ENCODE measurements at regions of chr1 and their contacts with region 1.

Region 1: GRCh38 chr1:241611063-241611462 is 29.1 kb downstream of the CHML start:
- DNase-seq: peak in 5 of 14 experiments; percentile 5 to 76 (median 68)
- ATAC-seq: peak; percentile 93
- H3K4me3 ChIP-seq: no peak overlapping the region
- H3K4me3 Mint-ChIP-seq: no peak overlapping the region
- H3K27ac ChIP-seq: no peak overlapping the region
- H3K27ac Mint-ChIP-seq: no peak overlapping the region
- H3K4me1 ChIP-seq: no peaks in the 10 kb centered on the region
- H3K4me1 Mint-ChIP-seq: no peaks in the 10 kb centered on the region
- H3K27me3 ChIP-seq: no peaks in the 10 kb centered on the region
- H3K27me3 Mint-ChIP-seq: no peaks in the 10 kb centered on the region
- CTCF ChIP-seq: peak; percentile 85

Region 2: DNA sequence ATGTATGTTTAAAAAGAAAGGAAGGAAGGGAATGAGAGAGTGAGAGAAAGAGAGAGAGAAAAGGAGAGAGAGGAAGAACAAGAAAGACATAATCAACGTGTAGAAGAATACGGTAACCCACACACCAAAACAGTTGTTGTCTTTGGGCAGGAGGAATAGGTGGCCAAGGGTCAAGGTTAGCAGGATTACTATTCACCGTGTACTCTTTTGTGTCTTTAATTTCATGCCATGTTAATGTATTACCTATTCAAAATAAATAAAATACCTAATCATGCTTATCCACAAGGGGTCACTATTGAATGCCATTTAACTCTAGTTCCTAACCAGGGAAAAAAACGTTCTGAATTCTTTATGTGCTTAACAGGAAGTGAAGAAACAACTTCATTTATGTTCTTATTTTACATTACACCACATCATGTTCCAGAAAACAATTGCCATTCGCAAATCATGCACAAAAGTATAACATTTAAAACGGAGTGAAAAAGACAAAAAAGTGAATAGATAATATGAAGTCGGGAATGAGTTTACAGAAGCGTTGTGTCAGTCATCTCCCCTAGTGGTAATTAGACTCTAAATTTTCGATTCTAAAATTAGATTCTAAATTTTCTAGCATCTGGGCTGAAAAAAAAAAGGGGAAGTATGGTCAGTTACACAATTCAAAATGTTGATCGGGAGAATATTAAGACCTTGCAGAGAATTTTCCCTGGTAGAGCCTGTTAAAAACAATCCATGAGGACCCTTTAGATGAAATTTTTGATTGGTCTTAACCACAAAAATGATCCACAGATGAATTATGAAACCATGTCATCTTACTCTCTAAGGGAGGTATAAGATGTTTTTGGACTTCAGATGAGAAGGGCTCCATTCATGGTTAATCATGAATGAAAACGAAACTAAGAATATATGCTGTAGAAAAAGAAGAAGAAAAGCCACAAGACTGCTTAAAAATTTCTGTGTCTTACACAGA is 79.6 kb before region 1 on chr1:
- CTCF ChIA-PET with region 1: no interaction called
- POLR2A ChIA-PET with region 1: no interaction called
- intact Hi-C with region 1: loop called (anchors 1 to 5 kb)
- DNase-seq: peak in 3 of 14 experiments; percentile 78 to 81 (median 78)
- ATAC-seq: peak; percentile 89
- H3K4me3 ChIP-seq: peak overlapping the region; percentile 59
- H3K4me3 Mint-ChIP-seq: peak overlapping the region; percentile 97
- H3K27ac ChIP-seq: no peak overlapping the region
- H3K27ac Mint-ChIP-seq: peak overlapping the region; percentile 42
- H3K4me1 ChIP-seq: peaks cover 2% of the 10 kb centered on the region
- H3K4me1 Mint-ChIP-seq: peaks cover 6% of the 10 kb centered on the region
- H3K27me3 ChIP-seq: no peaks in the 10 kb centered on the region
- H3K27me3 Mint-ChIP-seq: no peaks in the 10 kb centered on the region
- CTCF ChIP-seq: peak; percentile 74

Region 3: DNA sequence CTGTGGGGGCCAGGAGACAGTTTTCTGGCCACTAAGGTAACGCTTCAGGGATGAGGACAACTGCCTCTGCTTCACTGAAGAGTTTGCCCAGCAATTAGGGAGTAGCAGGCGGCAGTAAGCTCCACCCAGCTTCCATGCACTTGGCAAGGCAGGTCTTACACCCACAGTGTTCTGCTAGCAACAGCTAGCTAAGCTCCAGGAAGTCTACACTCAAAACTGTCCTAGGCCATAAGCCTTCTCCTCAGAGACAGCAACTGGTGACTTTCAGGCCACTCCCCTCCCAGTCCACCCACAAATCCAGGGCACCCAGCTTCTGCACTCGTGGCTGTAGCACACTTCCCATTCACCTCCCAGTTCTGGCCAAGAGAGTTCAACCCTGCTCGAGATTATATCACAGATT is 31.6 kb before region 1 on chr1:
- CTCF ChIA-PET with region 1: no interaction called
- POLR2A ChIA-PET with region 1: no interaction called
- intact Hi-C with region 1: no loop called
- DNase-seq: no peak
- ATAC-seq: no peak
- H3K4me3 ChIP-seq: no peak overlapping the region
- H3K4me3 Mint-ChIP-seq: no peak overlapping the region
- H3K27ac ChIP-seq: no peak overlapping the region
- H3K27ac Mint-ChIP-seq: no peak overlapping the region
- H3K4me1 ChIP-seq: no peaks in the 10 kb centered on the region
- H3K4me1 Mint-ChIP-seq: no peaks in the 10 kb centered on the region
- H3K27me3 ChIP-seq: no peaks in the 10 kb centered on the region
- H3K27me3 Mint-ChIP-seq: peaks cover 26% of the 10 kb centered on the region
- CTCF ChIP-seq: no peak

Region 4: GRCh38 chr1:241592273-241592958 is 18.6 kb before region 1 on chr1:
- CTCF ChIA-PET with region 1: no interaction called
- POLR2A ChIA-PET with region 1: no interaction called
- intact Hi-C with region 1: no loop called
- DNase-seq: peak in 2 of 14 experiments; percentile 21 to 54
- ATAC-seq: no peak
- H3K4me3 ChIP-seq: no peak overlapping the region
- H3K4me3 Mint-ChIP-seq: no peak overlapping the region
- H3K27ac ChIP-seq: no peak overlapping the region
- H3K27ac Mint-ChIP-seq: no peak overlapping the region
- H3K4me1 ChIP-seq: no peaks in the 10 kb centered on the region
- H3K4me1 Mint-ChIP-seq: no peaks in the 10 kb centered on the region
- H3K27me3 ChIP-seq: no peaks in the 10 kb centered on the region
- H3K27me3 Mint-ChIP-seq: no peaks in the 10 kb centered on the region
- CTCF ChIP-seq: no peak

Region 5: GRCh38 chr1:241749901-241750695 is 139.0 kb after region 1 on chr1:
- CTCF ChIA-PET with region 1: no interaction called
- POLR2A ChIA-PET with region 1: no interaction called
- intact Hi-C with region 1: loop called in 1 of 2 experiments (anchors 10 kb)
- DNase-seq: no peak
- ATAC-seq: no peak
- H3K4me3 ChIP-seq: no peak overlapping the region
- H3K4me3 Mint-ChIP-seq: no peak overlapping the region
- H3K27ac ChIP-seq: no peak overlapping the region
- H3K27ac Mint-ChIP-seq: no peak overlapping the region
- H3K4me1 ChIP-seq: no peaks in the 10 kb centered on the region
- H3K4me1 Mint-ChIP-seq: no peaks in the 10 kb centered on the region
- H3K27me3 ChIP-seq: no peaks in the 10 kb centered on the region
- H3K27me3 Mint-ChIP-seq: no peaks in the 10 kb centered on the region
- CTCF ChIP-seq: no peak

Region 6: GRCh38 chr1:241895013-241895412 is 283.9 kb after region 1 on chr1:
- CTCF ChIA-PET with region 1: interaction called, 3 read pairs
- POLR2A ChIA-PET with region 1: interaction called, 3 read pairs
- intact Hi-C with region 1: loop called in 1 of 2 experiments (anchors 5 kb)
- DNase-seq: no peak
- ATAC-seq: no peak
- H3K4me3 ChIP-seq: no peak overlapping the region
- H3K4me3 Mint-ChIP-seq: no peak overlapping the region
- H3K27ac ChIP-seq: no peak overlapping the region
- H3K27ac Mint-ChIP-seq: no peak overlapping the region
- H3K4me1 ChIP-seq: no peaks in the 10 kb centered on the region
- H3K4me1 Mint-ChIP-seq: no peaks in the 10 kb centered on the region
- H3K27me3 ChIP-seq: no peaks in the 10 kb centered on the region
- H3K27me3 Mint-ChIP-seq: no peaks in the 10 kb centered on the region
- CTCF ChIP-seq: no peak

Region 7: GRCh38 chr1:242017584-242018233 is 406.6 kb after region 1 on chr1:
- CTCF ChIA-PET with region 1: no interaction called
- POLR2A ChIA-PET with region 1: no interaction called
- intact Hi-C with region 1: loop called (anchors 1 to 5 kb)
- DNase-seq: peak in 9 of 14 experiments; percentile 3 to 57 (median 15)
- ATAC-seq: no peak
- H3K4me3 ChIP-seq: no peak overlapping the region
- H3K4me3 Mint-ChIP-seq: no peak overlapping the region
- H3K27ac ChIP-seq: no peak overlapping the region
- H3K27ac Mint-ChIP-seq: no peak overlapping the region
- H3K4me1 ChIP-seq: no peaks in the 10 kb centered on the region
- H3K4me1 Mint-ChIP-seq: no peaks in the 10 kb centered on the region
- H3K27me3 ChIP-seq: no peaks in the 10 kb centered on the region
- H3K27me3 Mint-ChIP-seq: no peaks in the 10 kb centered on the region
- CTCF ChIP-seq: peak; percentile 60